Activated T-helper 1 cell treated with anti-CD3 and anti-CD28 coated beads, Interleukin-12 subunit alpha, Interleukin-12 subunit beta, Interleukin-2, Interleukin-4 antibody, amounts not matched to agents 30 ng/mL and 10 ng/mL and 1 ng/mL, durations not matched to agents 14 hours and 24 hours and 36 hours (primary cell): ENCODE measurements at regions of chr3 and their contacts with region 1.

Region 1: GRCh38 chr3:67654099-67654843 is at the start of gene SUCLG2:
- DNase-seq: peak; percentile 78
- H3K4me3 Mint-ChIP-seq: peak within 1 kb of the TSS; percentile 82
- H3K27ac Mint-ChIP-seq: peak within 1 kb of the TSS; percentile 85
- H3K4me1 Mint-ChIP-seq: peaks cover 59% of the 10 kb centered on the region
- H3K27me3 Mint-ChIP-seq: no peaks in the 10 kb centered on the region
- total RNA-seq, gene SUCLG2: 30.3 and 31.0 TPM in 2 replicates

Region 2: GRCh38 chr3:65953301-65953812 is 1700.9 kb before region 1 on chr3:
- intact Hi-C with region 1: no loop called
- DNase-seq: no peak
- H3K4me3 Mint-ChIP-seq: no peak overlapping the region
- H3K27ac Mint-ChIP-seq: no peak overlapping the region
- H3K4me1 Mint-ChIP-seq: no peaks in the 10 kb centered on the region
- H3K27me3 Mint-ChIP-seq: peaks cover 1% of the 10 kb centered on the region

Region 3: DNA sequence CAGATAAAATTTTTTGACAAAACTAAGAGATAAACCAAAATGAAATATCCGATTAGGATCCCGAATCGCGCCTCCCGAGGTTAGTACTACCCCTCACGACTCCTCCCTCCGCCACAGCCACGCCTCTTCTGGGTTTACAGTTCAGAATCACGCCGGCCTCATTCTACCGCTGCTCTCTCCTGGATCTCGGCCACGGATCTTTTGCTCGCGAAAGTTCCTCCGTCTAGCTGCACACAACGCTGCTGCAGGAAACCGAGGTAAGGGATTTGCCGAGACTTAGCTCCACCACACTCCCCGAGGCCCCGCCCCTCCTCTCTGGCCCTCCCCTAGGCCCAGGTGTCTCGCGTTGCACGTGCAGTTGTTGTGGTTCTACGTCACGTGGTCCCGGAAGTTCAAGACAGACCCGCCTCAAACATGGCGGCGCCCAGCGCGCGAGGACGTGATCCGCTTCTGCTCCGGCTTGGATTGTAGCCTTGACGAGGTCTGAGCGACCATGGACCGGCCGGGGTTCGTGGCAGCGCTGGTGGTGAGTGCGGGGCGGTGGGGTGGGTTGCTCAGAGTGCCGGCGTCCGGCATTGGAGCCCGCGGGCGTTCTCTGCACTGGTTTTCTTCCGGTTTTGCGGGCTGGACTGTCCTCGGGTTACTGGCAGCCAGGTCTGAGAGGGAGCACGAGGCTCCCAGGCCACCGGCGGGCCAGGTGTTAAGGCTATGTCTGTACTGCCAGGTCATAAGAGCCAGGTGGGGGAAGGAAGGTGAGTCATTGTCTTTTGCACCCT is 1433.5 kb before region 1 on chr3 and contains the start of gene SLC25A26:
- intact Hi-C with region 1: loop called (anchors 1 kb)
- DNase-seq: peak; percentile 97
- H3K4me3 Mint-ChIP-seq: peak within 1 kb of the TSS; percentile 98
- H3K27ac Mint-ChIP-seq: peak within 1 kb of the TSS; percentile 85
- H3K4me1 Mint-ChIP-seq: peaks cover 41% of the 10 kb centered on the region
- H3K27me3 Mint-ChIP-seq: peaks cover 2% of the 10 kb centered on the region
- total RNA-seq, gene SLC25A26: 17.0 and 18.8 TPM in 2 replicates

Region 4: GRCh38 chr3:66483406-66483906 is 1170.8 kb before region 1 on chr3:
- intact Hi-C with region 1: loop called (anchors 5 kb)
- DNase-seq: no peak
- H3K4me3 Mint-ChIP-seq: peak overlapping the region; percentile 42
- H3K27ac Mint-ChIP-seq: peak overlapping the region; percentile 35
- H3K4me1 Mint-ChIP-seq: peaks cover 52% of the 10 kb centered on the region
- H3K27me3 Mint-ChIP-seq: no peaks in the 10 kb centered on the region

Region 5: GRCh38 chr3:67349551-67350174 is 304.6 kb before region 1 on chr3:
- intact Hi-C with region 1: loop called (anchors 1 kb)
- DNase-seq: no peak
- H3K4me3 Mint-ChIP-seq: no peak overlapping the region
- H3K27ac Mint-ChIP-seq: peak overlapping the region; percentile 3
- H3K4me1 Mint-ChIP-seq: peaks cover 14% of the 10 kb centered on the region
- H3K27me3 Mint-ChIP-seq: peaks cover 3% of the 10 kb centered on the region

Region 6: DNA sequence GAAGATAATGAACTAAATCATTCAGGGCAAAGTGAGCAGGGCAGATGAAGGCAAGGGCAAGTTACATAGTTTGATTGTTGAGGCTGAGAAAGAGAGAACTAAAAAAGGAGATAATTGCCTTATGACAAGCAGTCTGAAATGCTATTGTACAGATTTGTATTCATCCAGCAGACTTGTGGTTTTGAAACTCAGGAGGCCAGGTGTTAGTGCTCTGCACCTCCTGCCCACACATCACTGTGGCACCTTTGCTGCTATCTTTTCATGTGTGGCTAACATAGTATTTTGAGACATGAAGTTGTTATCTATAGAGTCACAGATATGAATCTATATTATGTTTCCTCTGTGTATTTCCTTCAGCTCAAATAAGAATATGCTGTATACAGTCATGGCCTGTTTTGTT is 24.4 kb after region 1 on chr3:
- intact Hi-C with region 1: loop called (anchors 2 kb)
- DNase-seq: no peak
- H3K4me3 Mint-ChIP-seq: no peak overlapping the region
- H3K27ac Mint-ChIP-seq: no peak overlapping the region
- H3K4me1 Mint-ChIP-seq: peaks cover 19% of the 10 kb centered on the region
- H3K27me3 Mint-ChIP-seq: peaks cover 2% of the 10 kb centered on the region

Region 7: GRCh38 chr3:69200384-69201068 is 1546.3 kb after region 1 on chr3:
- intact Hi-C with region 1: loop called (anchors 10 kb)
- DNase-seq: peak; percentile 36
- H3K4me3 Mint-ChIP-seq: peak overlapping the region; percentile 92
- H3K27ac Mint-ChIP-seq: peak overlapping the region; percentile 92
- H3K4me1 Mint-ChIP-seq: peaks cover 79% of the 10 kb centered on the region
- H3K27me3 Mint-ChIP-seq: no peaks in the 10 kb centered on the region